ENCODE measurements at regions of chr10 and their contacts with region 1.

Region 1: GRCh38 chr10:14822879-14823755 is 14.7 kb downstream of the CDNF start:
- DNase-seq: peak in 3 of 10 donors; percentile 15 to 40 (median 27)

Region 2: DNA sequence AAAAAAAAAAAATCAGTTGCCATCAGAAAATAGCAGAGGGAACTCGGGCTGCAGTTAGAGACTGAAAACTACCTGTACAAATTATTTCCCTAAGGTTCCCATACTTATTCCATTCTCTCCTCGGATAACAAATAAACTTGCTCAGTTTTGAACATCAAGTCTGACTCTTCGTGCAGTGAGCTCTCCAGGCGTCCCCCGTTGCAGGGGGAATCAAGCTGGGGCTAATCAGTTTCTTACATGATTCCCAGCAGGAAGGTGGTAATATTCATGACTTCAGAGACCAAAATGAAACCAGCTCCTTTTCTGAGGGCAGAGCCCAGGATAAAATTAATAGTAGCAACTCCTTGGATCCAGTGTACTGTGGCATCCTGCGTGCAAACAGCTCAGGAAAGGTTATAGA is 627.7 kb before region 1 on chr10:
- intact Hi-C with region 1: loop called (anchors 5 kb)
- DNase-seq: no peak

Region 3: DNA sequence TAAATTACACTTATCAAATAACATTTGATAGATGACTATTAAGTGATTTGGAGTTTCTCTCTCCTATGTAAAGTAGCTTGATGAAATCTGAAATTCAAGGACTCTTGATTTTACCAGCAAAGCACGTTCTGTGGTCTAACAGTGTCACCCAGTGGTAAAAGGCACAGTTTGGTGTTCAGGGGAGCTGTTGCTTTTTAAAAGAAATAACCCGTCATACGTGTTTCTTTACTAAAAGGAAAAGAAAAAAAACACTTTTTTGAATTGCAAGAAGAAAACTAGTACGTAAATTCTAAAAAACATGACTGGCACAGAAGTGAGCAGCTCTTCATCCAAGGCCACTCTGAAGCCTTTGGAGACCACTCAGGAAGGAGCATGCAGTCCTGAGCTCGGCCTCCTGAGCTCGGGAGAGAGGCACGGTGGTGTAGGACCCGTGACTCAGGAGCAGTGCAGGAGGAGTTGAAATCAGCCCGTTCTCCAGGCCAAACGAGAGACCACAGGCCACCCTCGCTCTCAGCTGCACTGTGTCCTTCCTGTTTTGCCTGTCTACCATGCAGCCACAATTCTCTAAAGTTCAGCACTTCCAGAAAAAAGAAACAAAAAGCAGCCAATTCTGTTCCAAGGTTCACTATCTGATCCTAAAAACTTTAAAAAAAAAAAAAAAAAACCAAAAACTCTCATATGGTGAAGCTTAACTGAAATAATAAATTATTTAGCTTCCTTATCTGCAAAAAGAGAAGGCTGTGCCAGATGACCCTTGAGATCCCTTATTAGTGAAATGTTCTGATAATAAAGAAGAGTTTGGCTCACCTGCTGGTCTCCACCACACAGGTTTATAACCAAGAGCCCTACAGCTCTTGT is 279.8 kb before region 1 on chr10:
- intact Hi-C with region 1: loop called (anchors 2 kb)
- DNase-seq: peak in 1 of 10 donors; percentile 66

Region 4: DNA sequence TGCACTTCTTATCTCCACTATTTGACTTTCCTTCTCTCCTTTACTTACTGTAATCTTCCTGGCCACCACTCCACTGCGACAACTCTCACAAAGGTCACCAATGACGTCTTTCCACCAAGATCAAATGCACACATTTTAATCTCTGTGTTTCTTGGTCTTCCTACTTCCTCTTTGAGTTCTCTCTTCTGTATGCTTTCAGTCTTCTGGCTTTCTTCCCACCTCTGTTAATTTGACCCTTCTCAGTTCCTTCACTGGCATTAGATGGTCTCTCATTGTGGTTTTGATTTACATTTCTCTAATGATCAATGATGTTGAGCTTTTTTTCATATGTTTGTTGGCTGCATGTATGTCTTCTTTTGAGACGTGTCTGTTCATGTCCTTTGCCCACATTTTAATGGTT is 80.3 kb before region 1 on chr10:
- intact Hi-C with region 1: no loop called
- DNase-seq: no peak